Activated CD8-positive, alpha-beta memory T cell treated with anti-CD3 and anti-CD28 coated beads, Interleukin-2, amount 10 ng/mL, durations not matched to agents 7 days and 5 days (primary cell): ENCODE measurements at regions of chr12 and their contacts with region 1.

Region 1: GRCh38 chr12:737122-737739 is 15.1 kb upstream of the WNK1 start:
- DNase-seq: no peak
- ATAC-seq: no peak
- H3K4me3 Mint-ChIP-seq: no peak overlapping the region
- H3K27ac Mint-ChIP-seq: no peak overlapping the region
- H3K4me1 Mint-ChIP-seq: peaks cover 10% of the 10 kb centered on the region
- H3K27me3 Mint-ChIP-seq: no peaks in the 10 kb centered on the region

Region 2: GRCh38 chr12:480831-481816 is 256.1 kb before region 1 on chr12:
- CTCF ChIA-PET with region 1: no interaction called
- DNase-seq: no peak
- ATAC-seq: no peak
- H3K4me3 Mint-ChIP-seq: no peak overlapping the region
- H3K27ac Mint-ChIP-seq: no peak overlapping the region
- H3K4me1 Mint-ChIP-seq: no peaks in the 10 kb centered on the region
- H3K27me3 Mint-ChIP-seq: peaks cover 21% of the 10 kb centered on the region

Region 3: GRCh38 chr12:712172-712863 is 24.9 kb before region 1 on chr12:
- CTCF ChIA-PET with region 1: no interaction called
- DNase-seq: no peak
- ATAC-seq: no peak
- H3K4me3 Mint-ChIP-seq: no peak overlapping the region
- H3K27ac Mint-ChIP-seq: no peak overlapping the region
- H3K4me1 Mint-ChIP-seq: peaks cover 23% of the 10 kb centered on the region
- H3K27me3 Mint-ChIP-seq: peaks cover 3% of the 10 kb centered on the region

Region 4: GRCh38 chr12:724194-724855 is 12.9 kb before region 1 on chr12:
- CTCF ChIA-PET with region 1: interaction called, 34 read pairs
- DNase-seq: no peak
- ATAC-seq: peak; percentile 86
- H3K4me3 Mint-ChIP-seq: no peak overlapping the region
- H3K27ac Mint-ChIP-seq: peak overlapping the region; percentile 75
- H3K4me1 Mint-ChIP-seq: peaks cover 54% of the 10 kb centered on the region
- H3K27me3 Mint-ChIP-seq: no peaks in the 10 kb centered on the region

Region 5: DNA sequence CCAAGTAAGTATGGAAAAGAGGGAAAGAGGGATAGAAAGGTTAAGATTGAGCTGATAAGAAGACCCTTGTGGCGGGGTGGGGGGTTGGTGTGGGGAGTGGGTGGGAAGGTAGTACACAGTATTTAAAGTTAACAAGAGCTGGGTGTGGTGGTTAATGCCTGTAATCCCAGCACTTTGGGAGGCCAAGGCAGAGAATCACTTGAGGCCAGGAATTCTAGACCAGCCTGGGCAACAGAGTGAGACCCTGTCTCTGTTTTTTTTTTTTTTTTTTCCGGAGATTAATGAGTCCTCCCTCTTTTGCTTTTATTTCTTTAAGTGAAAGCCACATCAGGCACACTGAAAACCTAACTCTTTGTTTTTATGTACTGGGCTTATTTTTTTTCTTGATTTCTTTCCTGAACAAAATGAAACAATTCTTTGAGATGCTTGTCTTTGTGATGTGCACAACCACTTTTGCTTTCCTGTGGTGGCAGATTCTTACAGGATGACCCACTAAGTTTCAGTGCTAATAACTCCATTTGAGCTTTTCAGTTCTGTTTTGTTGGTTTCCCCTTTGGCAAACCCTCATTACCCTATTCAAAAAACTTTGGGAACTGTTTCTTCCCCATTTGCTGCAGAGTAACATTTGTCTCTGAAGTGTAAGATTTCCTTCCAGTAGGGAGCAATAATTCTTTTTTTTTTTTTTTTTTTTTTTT is 70.0 kb after region 1 on chr12:
- CTCF ChIA-PET with region 1: no interaction called
- DNase-seq: no peak
- ATAC-seq: peak; percentile 38
- H3K4me3 Mint-ChIP-seq: peak overlapping the region; percentile 49
- H3K27ac Mint-ChIP-seq: peak overlapping the region; percentile 55
- H3K4me1 Mint-ChIP-seq: peaks cover 70% of the 10 kb centered on the region
- H3K27me3 Mint-ChIP-seq: no peaks in the 10 kb centered on the region